Posterior cingulate gyrus (tissue), 11 donors: ENCODE measurements at regions of chr17 and their contacts with region 1.

Region 1: GRCh38 chr17:34961093-34961911 is at the starts of genes CCT6B and ZNF830:
- DNase-seq: peak; percentile 83 to 98 (median 92)

Region 2: DNA sequence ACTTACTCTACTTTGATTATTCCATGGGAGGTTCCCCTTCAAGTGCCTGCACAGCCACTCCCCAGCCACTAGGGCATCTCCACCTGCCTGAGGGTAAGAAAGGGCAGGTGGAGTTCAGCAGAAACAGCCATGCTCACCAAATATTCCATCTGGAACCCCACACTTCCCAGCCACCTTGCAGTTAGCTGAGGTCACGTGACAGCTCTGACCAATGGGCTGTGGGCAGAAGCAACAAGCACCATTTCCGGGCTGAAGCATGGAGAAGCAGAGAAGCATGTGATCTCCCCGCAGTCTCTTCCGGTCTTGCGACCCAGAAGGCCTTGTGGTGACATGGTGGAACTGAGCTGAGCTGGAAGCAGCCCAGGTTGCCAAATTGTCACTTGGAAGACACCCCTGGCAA is 108.7 kb before region 1 on chr17:
- intact Hi-C with region 1: no loop called
- DNase-seq: peak in 1 of 10 donors; percentile 16

Region 3: DNA sequence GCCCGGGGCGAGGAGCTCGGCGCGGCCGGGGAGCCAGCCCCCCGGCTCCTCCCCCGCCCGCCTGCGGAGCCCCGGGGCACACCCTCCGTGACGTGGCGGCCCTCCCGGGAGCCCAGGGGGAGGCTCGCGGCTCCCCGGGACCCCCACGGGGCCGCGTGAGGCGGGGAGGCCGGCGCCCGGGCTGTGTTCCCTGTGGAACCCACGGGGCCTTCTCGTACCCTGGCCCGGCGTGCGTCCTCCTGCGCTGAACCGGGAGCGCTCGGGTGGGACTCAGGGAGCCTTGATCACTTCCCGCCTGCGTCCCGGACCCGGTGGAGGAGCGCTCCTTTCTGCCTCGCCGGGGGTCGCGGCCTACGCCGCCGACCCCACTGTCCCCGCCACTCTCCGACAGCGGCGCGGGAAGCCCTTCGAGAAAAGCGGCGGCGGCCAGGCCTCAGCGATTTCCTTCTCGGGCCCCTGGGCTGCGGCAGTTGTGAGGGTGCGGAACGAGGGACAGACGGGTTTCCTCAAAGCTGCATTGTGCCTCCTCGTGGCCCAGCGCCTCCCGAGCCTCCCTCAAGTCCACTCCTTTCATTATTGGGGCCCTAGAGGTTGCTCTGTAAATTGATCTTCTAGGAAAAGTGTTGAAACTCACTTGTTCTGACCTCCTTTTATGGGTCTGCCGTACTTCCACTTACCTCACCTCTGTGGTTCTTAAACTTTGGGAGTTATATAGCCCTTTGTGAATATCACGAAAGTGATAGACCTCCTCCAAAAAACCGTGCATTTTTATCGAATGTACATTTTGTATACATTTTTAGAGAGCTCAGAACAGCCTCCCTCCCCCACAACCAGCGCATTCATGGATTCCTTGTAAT is 19.6 kb after region 1 on chr17:
- intact Hi-C with region 1: loop called (anchors 1 kb)
- DNase-seq: peak; percentile 41 to 96 (median 65)

Region 4: DNA sequence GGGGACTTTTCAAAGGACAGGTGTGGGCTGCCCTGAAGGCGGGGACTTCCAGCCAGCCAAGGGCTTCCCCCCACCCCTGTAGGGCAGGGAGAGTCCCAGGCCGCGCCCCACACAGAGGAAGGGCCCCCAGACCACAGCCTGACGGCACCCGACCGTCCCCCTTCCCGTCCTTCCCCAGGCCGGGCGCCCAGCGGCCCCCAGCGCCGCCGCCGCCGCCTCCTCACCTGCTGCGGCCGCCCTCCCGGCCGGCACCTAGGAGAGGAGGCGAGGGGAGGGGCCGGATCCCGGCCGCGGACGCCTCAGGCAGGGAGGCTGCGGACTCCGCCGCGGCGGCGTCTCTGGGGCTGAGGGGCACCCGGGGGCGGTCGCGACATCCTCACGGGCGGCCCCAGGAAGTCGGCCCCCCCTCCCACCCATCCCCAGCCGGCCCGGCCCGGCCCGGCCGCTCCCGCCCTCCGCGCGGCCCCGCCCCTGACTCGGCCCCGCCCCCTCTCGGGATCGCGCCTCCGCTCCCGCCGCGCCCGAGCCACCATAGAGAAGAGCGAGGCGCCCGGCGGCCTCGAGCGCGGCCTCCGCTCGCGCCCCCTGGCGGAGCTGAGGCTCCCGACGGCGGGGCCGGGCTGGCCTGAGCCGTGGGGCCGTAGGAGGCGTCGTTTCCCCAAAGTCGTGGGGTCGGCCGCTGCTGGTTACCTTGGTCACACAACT is 127.7 kb after region 1 on chr17:
- intact Hi-C with region 1: loop called (anchors 10 kb)
- DNase-seq: peak; percentile 77 to 98 (median 85)